Right ventricle myocardium superior (tissue), 1 donor: ENCODE measurements at regions of chr7 and their contacts with region 1.

Region 1: GRCh38 chr7:75878769-75879611 is at the start of gene RHBDD2:
- DNase-seq: peak; percentile 96
- ATAC-seq: peak; percentile 99
- total RNA-seq, gene RHBDD2: 16.3 TPM

Region 2: DNA sequence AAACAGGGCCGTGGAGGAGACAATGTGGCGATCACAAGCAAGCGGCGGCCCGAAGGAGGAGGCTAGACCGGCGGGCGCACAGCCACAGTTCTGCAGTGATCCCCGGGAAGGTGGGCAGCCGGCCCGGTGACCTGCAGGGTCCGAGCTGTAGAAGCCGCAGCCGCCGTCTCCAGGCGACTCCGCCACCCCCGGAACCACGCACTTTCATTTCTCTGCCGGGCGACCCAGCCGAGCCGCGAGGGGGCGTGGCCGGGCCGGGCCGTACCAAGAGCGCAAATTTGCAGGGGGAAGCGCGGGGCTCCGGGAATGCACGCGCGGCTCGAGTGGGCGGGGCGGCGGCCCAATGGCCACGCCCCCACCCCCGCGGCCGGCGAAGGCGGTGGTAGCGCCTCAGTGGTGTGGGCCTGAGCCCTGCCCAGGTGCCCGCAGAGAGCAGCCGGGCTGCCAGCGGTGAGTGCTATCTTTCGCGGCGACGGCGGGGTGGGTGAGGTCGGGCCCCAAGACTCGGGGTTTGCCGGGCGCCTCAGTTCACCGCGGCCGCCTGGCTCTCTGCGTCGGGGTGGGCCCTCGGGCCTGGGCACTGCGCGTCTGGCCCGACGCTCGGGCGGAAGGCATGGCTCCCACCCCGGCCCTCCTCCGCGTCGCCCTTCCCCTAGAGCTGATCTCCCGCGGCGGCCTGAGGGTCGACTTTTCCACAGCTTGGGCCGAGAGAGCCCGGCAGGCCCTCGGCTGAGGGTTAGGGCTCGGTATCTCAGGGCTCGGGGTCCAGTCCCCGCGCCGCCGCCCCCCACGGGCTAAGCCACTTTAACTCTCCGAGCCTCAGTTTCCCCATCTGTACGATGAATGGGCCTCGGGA is 36.0 kb after region 1 on chr7 and contains the start of gene POR:
- intact Hi-C with region 1: loop called (anchors 5 kb)
- DNase-seq: peak; percentile 97
- ATAC-seq: peak; percentile 99
- total RNA-seq, gene POR: 54.7 TPM